Activated CD4-positive, alpha-beta T cell treated with anti-CD3 and anti-CD28 coated beads for 36 hours (primary cell): ENCODE measurements at regions of chr5 and their contacts with region 1.

Region 1: GRCh38 chr5:176647030-176647866 is at the start of gene TSPAN17:
- DNase-seq: peak; percentile 100
- ATAC-seq: peak; percentile 95
- H3K4me3 Mint-ChIP-seq: peak within 1 kb of the TSS; percentile 81
- H3K27ac Mint-ChIP-seq: peak within 1 kb of the TSS; percentile 87
- H3K4me1 Mint-ChIP-seq: peaks cover 36% of the 10 kb centered on the region
- H3K27me3 Mint-ChIP-seq: no peaks in the 10 kb centered on the region
- total RNA-seq, gene TSPAN17: 19.4 to 25.2 TPM

Region 2: GRCh38 chr5:175895215-175896102 is 751.8 kb before region 1 on chr5:
- CTCF ChIA-PET with region 1: no interaction called
- POLR2A ChIA-PET with region 1: no interaction called
- intact Hi-C with region 1: no loop called
- DNase-seq: peak; percentile 57
- ATAC-seq: peak; percentile 99
- H3K4me3 Mint-ChIP-seq: no peak overlapping the region
- H3K27ac Mint-ChIP-seq: no peak overlapping the region
- H3K4me1 Mint-ChIP-seq: peaks cover 20% of the 10 kb centered on the region
- H3K27me3 Mint-ChIP-seq: no peaks in the 10 kb centered on the region

Region 3: GRCh38 chr5:176388444-176389134 is 258.7 kb before region 1 on chr5 and contains the starts of genes HIGD2A and NOP16:
- CTCF ChIA-PET with region 1: no interaction called
- POLR2A ChIA-PET with region 1: no interaction called
- intact Hi-C with region 1: loop called in 1 of 2 experiments (anchors 1 kb)
- DNase-seq: peak; percentile 100
- ATAC-seq: peak; percentile 93
- H3K4me3 Mint-ChIP-seq: peak within 1 kb of the TSS; percentile 95
- H3K27ac Mint-ChIP-seq: peak within 1 kb of the TSS; percentile 100
- H3K4me1 Mint-ChIP-seq: peaks cover 31% of the 10 kb centered on the region
- H3K27me3 Mint-ChIP-seq: no peaks in the 10 kb centered on the region
- total RNA-seq, gene HIGD2A: 104 to 140 TPM
- total RNA-seq, gene NOP16: 54.3 to 65.4 TPM

Region 4: DNA sequence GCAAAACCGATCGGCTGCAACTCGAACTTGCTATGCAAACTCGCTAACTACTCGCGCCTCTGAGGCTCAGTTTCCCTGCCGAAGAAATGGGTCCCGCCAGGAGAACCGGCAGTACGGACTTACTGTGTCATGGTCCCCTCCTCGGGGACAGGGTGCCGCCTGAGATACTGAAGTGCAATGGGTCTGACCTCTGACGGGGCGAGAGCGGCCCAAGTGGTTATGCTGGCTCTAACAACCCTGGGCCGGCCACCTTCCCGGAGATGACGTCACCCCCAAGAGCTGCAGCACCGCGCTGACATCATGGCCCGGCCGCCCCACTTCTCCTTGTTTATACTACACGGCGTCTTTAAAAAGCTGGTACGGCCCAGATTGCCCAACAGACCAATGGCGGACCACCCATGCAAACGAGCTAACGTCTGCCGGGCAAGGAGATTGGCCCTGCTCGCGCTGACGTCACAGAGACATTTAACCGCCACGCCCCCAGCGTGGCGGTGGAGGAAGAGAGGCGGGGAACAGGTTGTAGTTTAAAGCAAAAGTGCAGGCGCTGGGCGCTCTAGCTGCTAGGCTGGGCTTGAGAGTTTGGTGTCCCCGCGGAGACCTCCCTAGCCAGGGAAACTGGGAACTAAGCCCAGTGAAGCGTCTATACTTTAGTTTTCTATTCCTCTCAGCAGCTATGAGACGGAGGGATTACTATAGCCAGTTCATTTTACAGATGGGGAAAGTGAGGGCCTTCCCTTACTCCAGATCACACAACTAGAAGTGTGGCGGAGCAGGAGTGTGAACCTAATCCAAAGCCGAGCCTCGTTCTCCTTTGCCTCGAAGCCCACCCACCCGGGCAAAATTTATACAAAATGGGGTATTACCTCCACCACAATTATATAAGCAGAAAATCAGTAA is 109.4 kb before region 1 on chr5:
- CTCF ChIA-PET with region 1: no interaction called
- POLR2A ChIA-PET with region 1: interaction called, 3 read pairs
- intact Hi-C with region 1: loop called (anchors 1 to 2 kb)
- DNase-seq: peak; percentile 99
- ATAC-seq: peak; percentile 75
- H3K4me3 Mint-ChIP-seq: peak overlapping the region; percentile 97
- H3K27ac Mint-ChIP-seq: peak overlapping the region; percentile 97
- H3K4me1 Mint-ChIP-seq: peaks cover 66% of the 10 kb centered on the region
- H3K27me3 Mint-ChIP-seq: no peaks in the 10 kb centered on the region

Region 5: GRCh38 chr5:176596689-176597416 is 50.4 kb before region 1 on chr5:
- CTCF ChIA-PET with region 1: no interaction called
- POLR2A ChIA-PET with region 1: no interaction called
- intact Hi-C with region 1: no loop called
- DNase-seq: peak; percentile 81
- ATAC-seq: peak; percentile 87
- H3K4me3 Mint-ChIP-seq: peak overlapping the region; percentile 48
- H3K27ac Mint-ChIP-seq: peak overlapping the region; percentile 68
- H3K4me1 Mint-ChIP-seq: peaks cover 8% of the 10 kb centered on the region
- H3K27me3 Mint-ChIP-seq: peaks cover 2% of the 10 kb centered on the region

Region 6: GRCh38 chr5:176619203-176619568 is 28.1 kb before region 1 on chr5:
- CTCF ChIA-PET with region 1: no interaction called
- POLR2A ChIA-PET with region 1: no interaction called
- intact Hi-C with region 1: loop called in 1 of 2 experiments (anchors 1 kb)
- DNase-seq: peak; percentile 95
- ATAC-seq: peak; percentile 100
- H3K4me3 Mint-ChIP-seq: no peak overlapping the region
- H3K27ac Mint-ChIP-seq: no peak overlapping the region
- H3K4me1 Mint-ChIP-seq: peaks cover 8% of the 10 kb centered on the region
- H3K27me3 Mint-ChIP-seq: peaks cover 46% of the 10 kb centered on the region

Region 7: DNA sequence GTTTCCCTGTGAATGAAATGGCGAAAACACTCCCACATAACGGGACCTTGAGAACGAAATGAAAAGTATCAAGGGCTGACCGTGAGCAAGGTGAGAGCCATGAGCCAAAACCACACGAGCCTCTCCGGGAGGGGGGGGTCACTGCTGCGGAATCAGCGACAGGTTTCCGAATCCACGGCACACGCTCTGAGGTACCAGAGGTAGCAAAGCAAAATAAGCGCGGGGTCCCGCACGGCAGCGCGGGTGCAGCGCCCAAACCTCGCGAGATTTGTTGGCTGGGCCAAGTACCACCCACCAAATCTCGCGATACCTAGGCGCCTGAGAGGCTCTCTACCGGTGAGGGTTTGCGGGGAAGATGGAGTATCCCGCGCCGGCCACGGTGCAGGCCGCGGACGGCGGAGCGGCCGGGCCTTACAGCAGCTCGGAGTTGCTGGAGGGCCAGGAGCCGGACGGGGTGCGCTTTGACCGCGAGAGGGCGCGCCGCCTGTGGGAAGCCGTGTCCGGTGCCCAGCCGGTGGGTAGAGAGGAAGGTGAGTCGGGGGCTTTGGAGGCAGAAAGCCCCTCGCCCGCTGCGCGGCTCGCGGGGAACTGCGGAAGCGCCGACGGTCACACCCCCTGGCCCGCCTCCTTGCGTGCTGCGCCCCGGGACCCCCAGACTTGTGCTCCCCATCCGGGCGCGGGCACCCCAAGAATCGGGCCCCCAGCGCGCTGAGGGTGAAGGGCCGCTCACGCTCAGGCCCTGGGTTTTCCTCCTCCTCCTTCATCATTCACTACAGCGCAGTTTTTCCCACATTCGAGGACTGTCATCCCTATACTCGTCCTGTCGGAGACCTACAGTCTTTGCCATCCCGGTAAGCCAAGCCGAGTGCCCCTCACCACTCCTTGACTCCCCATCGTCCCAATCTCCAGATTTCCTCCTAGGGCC is 375.4 kb after region 1 on chr5 and contains the start of gene ZNF346:
- CTCF ChIA-PET with region 1: no interaction called
- POLR2A ChIA-PET with region 1: no interaction called
- intact Hi-C with region 1: loop called in 1 of 2 experiments (anchors 2 kb)
- DNase-seq: peak; percentile 97
- ATAC-seq: peak; percentile 97
- H3K4me3 Mint-ChIP-seq: peak within 1 kb of the TSS; percentile 91
- H3K27ac Mint-ChIP-seq: peak within 1 kb of the TSS; percentile 95
- H3K4me1 Mint-ChIP-seq: peaks cover 34% of the 10 kb centered on the region
- H3K27me3 Mint-ChIP-seq: no peaks in the 10 kb centered on the region
- total RNA-seq, gene ZNF346: 16.5 to 23.3 TPM